ENCODE measurements at regions of chr6 and their contacts with region 1.

Region 1: DNA sequence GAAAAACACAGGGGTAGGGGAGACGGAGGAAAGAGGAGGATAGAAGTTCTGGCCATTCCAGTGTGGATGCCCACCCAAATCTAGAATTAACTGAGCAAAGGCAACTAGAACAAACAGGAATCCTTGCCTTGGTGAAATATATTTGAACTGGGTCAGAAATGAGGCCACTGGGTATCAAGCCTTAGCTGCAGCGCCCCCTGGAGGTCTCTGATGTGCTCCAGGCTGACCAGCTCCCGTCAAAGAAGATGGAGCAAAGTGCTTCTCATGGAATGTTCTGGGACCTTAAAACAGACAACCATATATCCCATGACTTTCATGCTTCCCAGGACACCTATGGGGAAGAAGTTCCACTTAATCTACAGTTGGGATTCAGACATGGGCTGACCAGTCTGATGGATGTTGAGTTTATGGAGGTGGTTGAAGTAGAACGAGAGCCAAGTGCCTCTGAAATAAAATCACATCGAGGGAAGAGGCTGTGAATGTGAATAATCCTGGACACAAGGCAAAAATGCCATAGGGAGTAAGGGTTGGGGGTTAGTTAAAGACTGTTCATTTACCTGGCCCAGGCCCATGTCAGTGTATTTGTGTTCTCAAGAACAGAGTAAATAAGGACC is 50.4 kb downstream of the HLA-DPB1 start:
- DNase-seq: peak; percentile 91
- ATAC-seq: peak; percentile 61
- H3K4me3 Mint-ChIP-seq: peak overlapping the region; percentile 9; the same call in 1 of the 2 replicates
- H3K27ac Mint-ChIP-seq: peak overlapping the region; percentile 91
- H3K4me1 Mint-ChIP-seq: peaks cover 51% of the 10 kb centered on the region
- H3K27me3 Mint-ChIP-seq: peaks cover 2% of the 10 kb centered on the region; the same call in 1 of the 2 replicates
- CTCF ChIP-seq: peak; percentile 88

Region 2: GRCh38 chr6:32763427-32763826 is 362.8 kb before region 1 on chr6 and contains the start of gene HLA-DQB2:
- CTCF ChIA-PET with region 1: no interaction called
- POLR2A ChIA-PET with region 1: no interaction called
- DNase-seq: no peak
- ATAC-seq: no peak
- H3K4me3 Mint-ChIP-seq: no peak within 1 kb of the TSS
- H3K27ac Mint-ChIP-seq: no peak within 1 kb of the TSS
- H3K4me1 Mint-ChIP-seq: peaks cover 18% of the 10 kb centered on the region
- H3K27me3 Mint-ChIP-seq: peaks cover 24% of the 10 kb centered on the region
- CTCF ChIP-seq: no peak
- total RNA-seq, gene HLA-DQB2: 0.39 to 0.76 TPM (median 0.42 TPM) in 3 replicates

Region 3: GRCh38 chr6:33008944-33009861 is 117.0 kb before region 1 on chr6 and contains the start of gene HLA-DOA:
- CTCF ChIA-PET with region 1: interaction called, 12 read pairs
- POLR2A ChIA-PET with region 1: interaction called, 3 read pairs
- DNase-seq: peak; percentile 78
- ATAC-seq: peak; percentile 94
- H3K4me3 Mint-ChIP-seq: peak within 1 kb of the TSS; percentile 82
- H3K27ac Mint-ChIP-seq: peak within 1 kb of the TSS; percentile 76
- H3K4me1 Mint-ChIP-seq: peaks cover 33% of the 10 kb centered on the region
- H3K27me3 Mint-ChIP-seq: no peaks in the 10 kb centered on the region; the same call in 1 of the 2 replicates
- CTCF ChIP-seq: no peak
- total RNA-seq, gene HLA-DOA: 13.6 to 24.6 TPM (median 24.4 TPM) in 3 replicates

Region 4: DNA sequence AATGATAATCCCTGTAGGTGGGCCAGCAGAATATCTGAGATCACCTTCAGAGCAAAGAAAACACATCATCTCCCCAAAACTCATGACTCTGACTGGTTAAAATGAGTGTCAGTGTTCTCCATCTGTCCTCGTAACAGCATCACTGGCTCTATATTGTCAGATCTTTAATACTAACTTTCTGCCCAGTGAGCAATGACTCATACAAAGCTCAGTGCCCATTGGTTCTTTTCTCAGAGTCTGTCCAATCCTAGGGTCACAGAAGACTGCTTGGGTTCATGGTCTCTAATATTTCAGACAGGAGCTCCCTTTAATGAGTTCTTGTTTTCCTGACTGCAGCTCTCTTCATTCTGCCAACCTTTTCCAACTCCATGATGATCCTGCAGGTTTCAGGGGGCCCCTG is 14.1 kb before region 1 on chr6:
- CTCF ChIA-PET with region 1: interaction called, 43 read pairs
- POLR2A ChIA-PET with region 1: interaction called, 7 read pairs
- DNase-seq: no peak
- ATAC-seq: peak; percentile 36
- H3K4me3 Mint-ChIP-seq: no peak overlapping the region
- H3K27ac Mint-ChIP-seq: no peak overlapping the region
- H3K4me1 Mint-ChIP-seq: peaks cover 26% of the 10 kb centered on the region
- H3K27me3 Mint-ChIP-seq: peaks cover 22% of the 10 kb centered on the region
- CTCF ChIP-seq: no peak

Region 5: GRCh38 chr6:33147807-33148666 is 21.8 kb after region 1 on chr6:
- CTCF ChIA-PET with region 1: interaction called, 76 read pairs
- POLR2A ChIA-PET with region 1: no interaction called
- DNase-seq: no peak
- ATAC-seq: no peak
- H3K4me3 Mint-ChIP-seq: no peak overlapping the region
- H3K27ac Mint-ChIP-seq: no peak overlapping the region; the same call in 1 of the 2 replicates
- H3K4me1 Mint-ChIP-seq: peaks cover 23% of the 10 kb centered on the region
- H3K27me3 Mint-ChIP-seq: peaks cover 9% of the 10 kb centered on the region
- CTCF ChIP-seq: peak; percentile 59; the same call in 1 of the 2 replicates

Region 6: DNA sequence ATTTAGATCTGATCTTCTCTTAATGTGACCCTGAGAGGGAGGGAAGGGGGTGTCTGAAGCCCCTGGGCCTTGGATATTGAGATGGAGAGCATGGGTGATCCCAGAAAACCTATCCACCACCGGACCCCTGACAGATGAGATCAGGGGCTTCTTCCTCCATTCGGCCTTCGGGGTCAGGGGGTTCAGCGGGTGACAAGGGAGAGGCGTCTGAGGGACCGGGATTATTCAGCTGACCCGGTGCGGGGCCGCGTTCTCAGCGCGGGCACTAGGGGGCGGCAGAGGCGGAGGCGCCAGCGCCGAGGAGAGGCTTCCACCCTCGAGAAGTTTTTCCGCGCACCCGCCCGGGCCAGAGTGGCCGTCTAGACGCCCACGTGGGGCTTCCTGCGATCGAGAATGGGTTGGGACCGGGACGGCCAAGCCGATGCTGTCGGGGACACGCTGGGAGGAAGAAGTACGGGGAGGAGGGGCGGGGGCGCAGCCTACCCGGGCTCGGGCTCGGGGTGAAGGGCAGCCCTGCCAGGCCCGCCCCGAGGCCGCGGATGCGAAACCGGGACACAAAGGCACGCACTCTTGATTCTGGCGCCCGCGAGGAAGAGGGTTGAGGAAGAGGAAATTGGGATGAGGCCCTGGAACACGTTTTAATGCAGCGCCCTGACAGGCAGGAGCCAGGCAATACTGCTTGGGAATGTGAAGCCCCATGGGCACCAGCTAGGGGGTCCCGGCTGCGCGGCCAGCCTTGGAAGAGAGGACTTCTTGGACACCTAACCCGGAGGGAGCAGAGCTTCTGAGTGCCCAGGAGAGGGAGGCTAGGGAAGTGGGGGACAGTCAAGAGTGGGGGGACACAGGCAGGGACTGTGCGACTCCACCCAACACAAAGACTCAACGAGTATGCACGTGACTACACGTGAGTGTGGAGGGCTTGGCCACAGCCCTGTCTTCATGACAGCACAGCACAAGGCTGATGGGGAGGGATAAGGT is 35.4 kb after region 1 on chr6:
- CTCF ChIA-PET with region 1: interaction called, 36 read pairs
- POLR2A ChIA-PET with region 1: no interaction called
- DNase-seq: peak; percentile 86
- ATAC-seq: peak; percentile 83
- H3K4me3 Mint-ChIP-seq: peak overlapping the region; percentile 86
- H3K27ac Mint-ChIP-seq: no peak overlapping the region
- H3K4me1 Mint-ChIP-seq: peaks cover 22% of the 10 kb centered on the region
- H3K27me3 Mint-ChIP-seq: peaks cover 25% of the 10 kb centered on the region
- CTCF ChIP-seq: peak; percentile 86

Region 7: DNA sequence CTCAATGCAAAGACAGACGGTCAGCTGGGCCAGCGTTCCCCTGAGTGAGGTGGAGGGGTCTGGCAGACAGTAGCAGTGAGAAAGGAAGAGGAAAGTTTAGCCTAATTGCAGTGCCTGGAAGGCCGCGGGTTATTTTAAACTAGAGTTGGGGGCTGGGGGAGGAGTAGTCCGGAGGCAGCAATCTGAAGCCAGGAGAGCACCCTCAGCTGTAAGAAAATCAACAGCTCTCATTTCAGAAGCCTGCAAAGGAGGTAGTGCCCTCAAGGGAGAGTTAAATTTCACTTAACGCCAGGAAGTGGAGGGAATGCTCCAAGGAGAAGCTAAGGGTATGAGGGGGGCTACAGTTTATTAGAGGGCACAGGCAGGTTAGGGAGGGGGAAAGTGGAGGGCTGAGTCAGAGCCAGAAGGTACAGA is 109.0 kb after region 1 on chr6:
- CTCF ChIA-PET with region 1: interaction called, 10 read pairs
- POLR2A ChIA-PET with region 1: no interaction called
- DNase-seq: no peak
- ATAC-seq: peak; percentile 71
- H3K4me3 Mint-ChIP-seq: peak overlapping the region; percentile 10
- H3K27ac Mint-ChIP-seq: peak overlapping the region; percentile 77
- H3K4me1 Mint-ChIP-seq: peaks cover 18% of the 10 kb centered on the region
- H3K27me3 Mint-ChIP-seq: peaks cover 27% of the 10 kb centered on the region
- CTCF ChIP-seq: no peak

Measured in WTC11 (cell line).